Activated naive CD4-positive, alpha-beta T cell treated with anti-CD3 and anti-CD28 coated beads for 36 hours (primary cell): ENCODE measurements at regions of chr9 and their contacts with region 1.

Region 1: DNA sequence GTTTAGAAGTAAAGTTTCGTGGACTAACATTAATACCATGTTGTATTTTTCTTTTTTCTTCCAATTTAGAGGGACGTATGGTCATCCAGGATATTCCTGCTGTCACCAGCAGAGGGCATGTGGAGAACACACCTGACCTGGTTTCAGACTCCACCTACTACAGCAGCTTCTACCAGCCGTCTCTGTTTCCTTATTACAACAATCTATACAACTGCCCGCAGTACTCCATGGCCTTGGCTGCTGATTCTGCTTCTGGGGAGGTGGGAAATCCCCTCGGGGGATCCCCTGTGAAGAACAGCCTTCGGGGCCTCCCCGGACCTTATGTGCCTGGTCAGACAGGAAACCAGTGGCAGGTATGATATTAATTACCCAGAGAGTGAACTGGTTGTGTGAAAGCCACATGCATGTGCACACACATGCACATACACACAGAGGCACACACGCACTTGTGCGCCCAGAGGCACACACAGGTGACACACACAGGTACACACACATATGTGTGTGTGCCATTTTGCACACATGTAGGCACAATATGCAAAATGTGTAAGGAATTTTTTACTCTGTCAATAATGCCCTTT is 52.4 kb downstream of the DMRT1 start:
- DNase-seq: peak; percentile 84
- H3K4me3 Mint-ChIP-seq: no peak overlapping the region
- H3K27ac Mint-ChIP-seq: no peak overlapping the region
- H3K4me1 Mint-ChIP-seq: peaks cover 11% of the 10 kb centered on the region
- H3K27me3 Mint-ChIP-seq: peaks cover 6% of the 10 kb centered on the region

Region 2: GRCh38 chr9:846852-847251 is 47.1 kb before region 1 on chr9:
- CTCF ChIA-PET with region 1: no interaction called
- intact Hi-C with region 1: loop called (anchors 2 kb)
- DNase-seq: no peak
- H3K4me3 Mint-ChIP-seq: no peak overlapping the region
- H3K27ac Mint-ChIP-seq: no peak overlapping the region
- H3K4me1 Mint-ChIP-seq: peaks cover 13% of the 10 kb centered on the region
- H3K27me3 Mint-ChIP-seq: peaks cover 38% of the 10 kb centered on the region

Region 3: GRCh38 chr9:971901-972500 is 78.1 kb after region 1 on chr9:
- CTCF ChIA-PET with region 1: no interaction called
- intact Hi-C with region 1: loop called (anchors 2 kb)
- DNase-seq: peak; percentile 30
- H3K4me3 Mint-ChIP-seq: peak overlapping the region; percentile 42
- H3K27ac Mint-ChIP-seq: no peak overlapping the region
- H3K4me1 Mint-ChIP-seq: peaks cover 37% of the 10 kb centered on the region
- H3K27me3 Mint-ChIP-seq: peaks cover 75% of the 10 kb centered on the region

Region 4: DNA sequence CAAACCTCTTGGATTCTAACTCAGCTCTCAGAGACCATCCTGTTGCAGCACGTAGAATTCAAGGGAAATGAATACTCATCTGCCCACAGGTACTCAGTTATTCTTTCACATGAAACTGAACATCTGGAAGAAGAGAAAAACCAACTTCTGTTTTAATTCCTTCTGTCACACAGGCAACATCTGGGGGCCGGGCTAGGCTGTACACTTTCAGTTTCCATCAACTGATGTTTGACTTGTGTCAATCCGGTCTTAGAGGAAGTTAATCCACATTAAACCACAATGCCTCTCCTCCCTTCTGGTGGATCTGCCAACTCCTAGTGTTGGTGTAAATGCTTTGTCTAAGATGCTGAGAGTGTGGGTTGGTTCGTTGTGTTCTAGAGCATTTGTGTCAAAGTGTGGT is 100.1 kb after region 1 on chr9:
- CTCF ChIA-PET with region 1: interaction called, 74 read pairs
- intact Hi-C with region 1: loop called (anchors 1 kb)
- DNase-seq: no peak
- H3K4me3 Mint-ChIP-seq: no peak overlapping the region
- H3K27ac Mint-ChIP-seq: no peak overlapping the region
- H3K4me1 Mint-ChIP-seq: no peaks in the 10 kb centered on the region
- H3K27me3 Mint-ChIP-seq: peaks cover 18% of the 10 kb centered on the region